A549 (cell line): ENCODE measurements at regions of chr17 and their contacts with region 1.

Region 1: DNA sequence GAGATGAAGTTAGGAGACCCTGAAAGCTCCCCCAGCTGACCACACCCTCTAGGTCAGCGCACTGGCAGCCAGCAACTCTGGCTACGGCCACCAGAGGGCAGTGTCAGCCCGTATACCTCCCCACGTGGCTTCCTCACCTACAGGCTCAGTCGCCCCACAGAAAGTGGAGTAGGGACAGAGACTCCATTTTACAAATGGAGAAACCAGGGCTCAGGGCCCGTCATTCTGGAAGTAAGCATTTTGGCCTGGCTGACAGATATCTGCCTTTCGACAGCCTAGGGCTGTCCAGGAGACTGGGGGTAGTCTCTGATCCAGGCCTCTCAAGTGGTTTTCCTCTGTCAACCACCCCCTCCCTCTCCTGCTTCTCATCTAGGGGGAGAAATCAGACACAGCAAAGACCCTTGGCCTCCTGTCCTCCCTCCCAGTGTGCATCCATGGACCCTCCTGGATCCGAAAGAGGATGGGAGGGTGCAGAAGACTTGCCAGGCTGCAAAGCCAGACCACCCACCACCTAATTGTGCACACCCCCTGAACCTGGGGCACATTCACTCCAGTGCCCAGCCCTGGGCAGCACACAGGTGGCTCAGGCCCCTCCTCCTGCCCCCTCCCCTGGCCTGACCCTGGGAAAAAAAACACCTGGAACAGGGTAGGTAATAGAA is 3.8 kb upstream of the HAP1 start:
- DNase-seq: peak; percentile 89 to 96
- ATAC-seq: peak; percentile 55 to 82
- H3K4me3 ChIP-seq: no peak overlapping the region
- H3K27ac ChIP-seq: peak overlapping the region; percentile 68 to 85
- H3K4me1 ChIP-seq: peaks cover 38% of the 10 kb centered on the region
- CTCF ChIP-seq: peak; percentile 99
- EP300 ChIP-seq: no peak
- POLR2A ChIP-seq: no peak
- RAD21 ChIP-seq: peak; percentile 100

Region 2: DNA sequence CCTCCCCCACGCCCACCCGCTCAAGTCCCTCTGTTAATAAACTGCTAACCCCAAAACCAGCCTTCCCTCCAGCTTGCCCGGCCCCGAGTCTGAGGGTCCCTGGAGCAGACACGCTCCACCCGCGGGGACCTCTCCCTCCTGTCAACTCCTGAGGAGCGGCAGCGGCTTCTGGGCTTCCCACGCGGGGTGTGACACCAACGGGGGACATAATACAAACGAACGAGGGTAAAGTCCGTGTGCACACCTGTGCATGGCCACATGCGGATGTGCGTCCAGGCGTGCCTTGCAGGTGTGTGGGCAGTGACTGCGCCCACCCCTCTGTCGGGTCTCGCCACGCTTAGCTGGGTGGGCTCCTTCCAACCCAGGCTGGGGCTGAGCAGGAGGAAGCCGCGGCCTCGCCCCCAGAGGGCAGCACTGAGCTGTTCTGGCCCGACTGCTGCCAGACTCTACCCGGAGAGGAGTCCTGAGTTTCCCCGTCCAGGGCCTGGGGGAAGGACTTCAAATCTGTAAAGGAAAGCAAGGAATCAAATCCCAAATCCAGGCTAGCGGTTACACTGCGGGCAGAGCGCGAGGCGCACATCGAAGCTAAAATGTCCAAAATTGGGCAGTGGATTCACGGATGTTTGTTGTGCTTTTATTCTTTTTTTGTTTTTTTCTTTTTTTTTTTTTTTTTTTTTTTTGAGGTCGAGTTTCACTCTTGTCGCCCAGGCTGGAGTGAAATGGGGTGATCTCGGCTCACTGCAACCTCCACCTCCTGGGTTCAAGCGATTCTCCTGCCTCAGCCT is 89.6 kb before region 1 on chr17:
- CTCF ChIA-PET with region 1: no interaction called
- POLR2A ChIA-PET with region 1: no interaction called
- DNase-seq: peak; percentile 92 to 93
- ATAC-seq: peak; percentile 84 to 94
- H3K4me3 ChIP-seq: peak overlapping the region; percentile 48
- H3K27ac ChIP-seq: peak overlapping the region; percentile 85 to 89
- H3K4me1 ChIP-seq: peaks cover 40% of the 10 kb centered on the region
- CTCF ChIP-seq: peak; percentile 93
- EP300 ChIP-seq: no peak
- POLR2A ChIP-seq: peak; percentile 38
- RAD21 ChIP-seq: peak; percentile 66 to 69

Region 3: GRCh38 chr17:41724476-41725050 is 13.6 kb before region 1 on chr17:
- CTCF ChIA-PET with region 1: interaction called, 46 read pairs
- POLR2A ChIA-PET with region 1: interaction called, 5 read pairs
- DNase-seq: no peak
- ATAC-seq: no peak
- H3K4me3 ChIP-seq: no peak overlapping the region
- H3K27ac ChIP-seq: no peak overlapping the region
- H3K4me1 ChIP-seq: no peaks in the 10 kb centered on the region
- CTCF ChIP-seq: no peak
- EP300 ChIP-seq: no peak
- POLR2A ChIP-seq: no peak
- RAD21 ChIP-seq: no peak

Region 4: DNA sequence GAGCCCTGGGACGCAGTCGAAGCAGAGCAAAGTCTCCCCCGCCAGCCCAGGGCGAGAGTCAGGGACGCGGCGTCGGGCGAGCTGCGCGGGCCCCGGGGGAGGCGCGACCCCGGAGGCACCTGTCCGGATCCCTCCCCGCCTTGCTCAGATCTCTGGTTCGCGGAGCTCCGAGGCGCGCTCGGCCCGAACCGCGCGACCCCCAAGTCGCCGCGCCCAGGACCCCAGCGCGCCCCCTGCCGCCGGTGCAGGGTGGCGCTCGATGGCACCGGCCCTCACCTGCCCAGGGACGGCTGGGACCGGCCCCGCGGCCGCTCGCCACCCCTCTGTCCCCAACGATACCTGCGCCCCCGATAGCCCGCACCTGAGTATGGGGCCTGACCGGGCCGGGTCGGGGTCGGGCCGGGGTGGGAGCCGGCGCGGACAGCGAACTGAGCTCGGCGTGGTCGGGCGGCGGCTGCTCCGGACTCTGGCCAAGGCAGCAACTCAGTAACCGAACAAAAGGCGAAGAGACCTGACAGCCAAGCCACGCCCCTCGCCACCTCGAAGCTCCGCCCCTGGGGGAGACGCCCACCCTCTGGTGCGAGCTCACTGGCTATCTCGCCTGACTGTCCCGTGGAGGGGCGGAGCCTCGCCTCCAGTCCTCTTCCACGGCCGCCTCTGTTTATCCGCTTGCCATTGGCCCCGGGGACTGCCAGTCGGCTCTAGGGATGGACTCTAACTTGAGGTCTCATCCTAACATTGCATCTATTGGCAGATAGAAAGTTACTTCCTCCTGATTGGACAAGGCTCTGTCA is 48.2 kb after region 1 on chr17 and contains the start of gene JUP:
- CTCF ChIA-PET with region 1: interaction called, 3,262 read pairs
- POLR2A ChIA-PET with region 1: interaction called, 12 read pairs
- DNase-seq: peak; percentile 100
- ATAC-seq: peak; percentile 90 to 95
- H3K4me3 ChIP-seq: peak within 1 kb of the TSS; percentile 83
- H3K27ac ChIP-seq: peak within 1 kb of the TSS; percentile 86
- H3K4me1 ChIP-seq: peaks cover 43% of the 10 kb centered on the region
- CTCF ChIP-seq: peak; percentile 96
- EP300 ChIP-seq: no peak; a peak in 1 of 5 replicates
- POLR2A ChIP-seq: peak; percentile 85
- RAD21 ChIP-seq: peak; percentile 42 to 70; a peak in 4 of 5 replicates
- polyA plus RNA-seq, gene JUP: 54.8 and 110 TPM in 2 replicates

Region 5: DNA sequence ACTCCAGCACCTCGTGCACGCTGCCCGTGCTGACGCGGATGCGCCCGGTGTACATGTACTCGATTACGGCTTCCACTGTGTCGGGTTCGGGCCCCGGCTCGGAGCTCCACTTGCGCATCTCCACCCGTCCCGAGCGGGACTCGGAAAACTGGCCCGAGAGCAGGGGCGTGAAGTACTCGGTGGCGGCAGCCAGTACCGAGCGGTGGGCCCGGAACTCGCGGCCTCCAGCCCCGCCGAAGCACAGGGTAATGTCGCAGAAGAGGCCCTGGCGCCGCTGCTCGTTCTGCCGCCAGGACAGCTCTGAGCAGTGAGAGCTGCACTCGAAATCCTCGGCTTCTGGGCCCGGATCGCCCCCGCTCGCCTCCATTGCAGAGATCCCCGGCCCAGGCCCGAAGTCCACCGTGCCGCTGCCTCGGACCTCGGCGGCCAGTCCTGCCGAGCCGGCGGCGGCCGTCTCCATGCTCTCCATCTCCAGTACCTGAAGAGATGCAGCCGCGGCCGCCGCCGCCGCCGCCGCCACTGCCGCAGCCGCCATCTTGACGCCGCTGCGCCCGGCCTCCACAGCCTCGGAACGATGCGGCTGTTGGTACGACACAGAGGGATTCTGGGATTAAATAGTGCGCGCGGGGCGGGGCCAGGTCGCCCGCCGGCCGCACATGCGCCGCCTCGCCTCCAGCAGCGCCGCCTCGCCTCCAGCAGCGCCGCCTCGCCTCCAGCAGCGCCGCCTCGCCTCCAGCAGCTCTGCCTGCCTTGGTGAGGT is 126.8 kb after region 1 on chr17 and contains the start of gene KLHL11:
- CTCF ChIA-PET with region 1: interaction called, 11 read pairs
- POLR2A ChIA-PET with region 1: interaction called, 5 read pairs
- DNase-seq: peak; percentile 93 to 96
- ATAC-seq: peak; percentile 89 to 96
- H3K4me3 ChIP-seq: peak within 1 kb of the TSS; percentile 89
- H3K27ac ChIP-seq: peak within 1 kb of the TSS; percentile 92 to 94
- H3K4me1 ChIP-seq: peaks cover 34% of the 10 kb centered on the region
- CTCF ChIP-seq: no peak
- EP300 ChIP-seq: no peak
- POLR2A ChIP-seq: peak; percentile 96
- RAD21 ChIP-seq: peak in 1 of 2 experiments; percentile 24; a peak in 2 of 5 replicates
- polyA plus RNA-seq, gene KLHL11: 12.7 and 13.7 TPM in 2 replicates

Region 6: DNA sequence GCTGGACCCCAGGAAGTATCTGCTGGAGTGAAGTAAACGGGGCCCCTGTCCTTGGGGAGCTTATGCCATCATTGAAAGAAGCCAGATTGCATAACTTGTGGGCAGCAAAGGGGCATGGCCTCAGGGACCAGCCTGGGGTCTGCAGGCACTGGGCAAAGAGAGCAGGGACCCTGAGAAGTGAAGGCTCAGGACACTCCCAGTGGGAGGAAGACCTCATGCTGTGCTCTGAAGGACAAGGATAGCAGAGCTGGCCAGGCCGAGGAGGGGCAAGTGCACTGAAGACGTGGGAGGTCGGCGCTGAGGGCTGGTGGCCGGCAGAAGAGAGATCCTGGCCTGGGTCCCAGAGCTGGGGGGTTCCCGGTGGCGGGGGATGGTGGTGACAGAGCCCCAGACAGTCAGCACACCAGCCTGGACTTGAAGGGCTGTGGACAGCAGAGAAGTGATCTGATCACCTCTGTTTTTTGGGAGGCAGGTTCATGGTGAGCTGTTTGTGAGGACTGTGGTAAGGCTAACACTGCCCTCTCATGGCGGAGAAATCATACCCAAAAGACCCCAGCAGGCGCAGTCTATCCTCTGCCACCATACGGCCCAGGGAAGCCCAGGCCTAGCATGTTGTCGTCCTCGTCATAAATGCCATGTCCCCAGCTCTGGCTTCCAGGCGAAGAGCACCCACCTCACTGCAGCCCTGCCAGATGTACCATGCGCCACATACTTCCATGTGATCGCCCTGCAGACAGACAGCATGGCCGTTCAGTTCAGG is 221.3 kb after region 1 on chr17:
- CTCF ChIA-PET with region 1: interaction called, 23 read pairs
- POLR2A ChIA-PET with region 1: interaction called, 7 read pairs
- DNase-seq: peak; percentile 76 to 82
- ATAC-seq: peak; percentile 79 to 89
- H3K4me3 ChIP-seq: no peak overlapping the region
- H3K27ac ChIP-seq: peak overlapping the region in 1 of 2 experiments; percentile 72; a peak in 3 of 6 replicates
- H3K4me1 ChIP-seq: peaks cover 7% of the 10 kb centered on the region; the same call in 2 of the 3 replicates
- CTCF ChIP-seq: peak; percentile 84
- EP300 ChIP-seq: no peak
- POLR2A ChIP-seq: no peak
- RAD21 ChIP-seq: peak; percentile 88 to 94